Vagina (tissue), 2 donors: ENCODE measurements at regions of chr7 and their contacts with region 1.

Region 1: DNA sequence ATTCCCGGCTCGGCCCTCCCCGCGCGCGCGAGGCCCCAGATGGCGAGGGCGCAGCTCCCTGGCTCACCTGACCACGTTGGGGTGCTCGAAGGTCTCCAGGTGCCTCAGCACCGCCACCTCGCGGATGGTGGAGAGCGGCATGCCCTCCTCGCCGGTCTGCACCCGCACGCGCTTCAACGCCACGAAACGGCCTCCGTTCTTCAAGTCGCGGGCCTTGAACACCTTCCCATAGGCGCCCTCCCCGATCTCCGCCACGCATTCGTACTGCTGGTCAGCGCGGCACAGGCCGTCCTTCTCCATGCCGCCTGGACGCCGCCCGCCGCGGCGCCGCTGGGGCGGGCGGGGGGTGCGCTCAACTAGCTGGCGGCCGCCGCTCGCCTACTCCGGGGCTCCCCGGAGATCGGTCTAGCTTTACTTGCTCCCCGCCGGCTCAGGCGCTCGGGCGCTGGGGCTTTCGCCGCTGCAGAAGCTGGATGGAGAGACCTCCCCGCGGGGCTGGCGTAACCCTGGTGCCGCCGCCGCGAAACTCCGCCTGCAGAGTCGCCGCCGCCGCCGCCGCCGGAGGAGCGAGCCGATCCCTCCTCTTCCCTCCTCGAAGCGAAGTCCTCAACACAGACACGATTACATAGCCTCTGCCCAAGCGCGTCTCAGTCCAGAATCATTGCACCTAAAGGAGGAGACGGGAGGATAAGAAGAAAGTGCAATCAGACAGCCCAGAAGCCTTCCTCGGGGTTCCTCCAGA is 3.2 kb downstream of the CDK6 start:
- DNase-seq: no peak
- H3K4me3 ChIP-seq: peak overlapping the region; percentile 57 to 89
- H3K27ac ChIP-seq: peak overlapping the region; percentile 84
- H3K4me1 ChIP-seq: peaks cover 42% of the 10 kb centered on the region
- H3K27me3 ChIP-seq: no peaks in the 10 kb centered on the region
- CTCF ChIP-seq: peak; percentile 51 to 89 (median 76)
- POLR2A ChIP-seq: no peak

Region 2: GRCh38 chr7:92614660-92615174 is 218.5 kb before region 1 on chr7:
- intact Hi-C with region 1: loop called (anchors 5 kb)
- DNase-seq: no peak
- H3K4me3 ChIP-seq: no peak overlapping the region
- H3K27ac ChIP-seq: no peak overlapping the region
- H3K4me1 ChIP-seq: no peaks in the 10 kb centered on the region
- H3K27me3 ChIP-seq: no peaks in the 10 kb centered on the region
- CTCF ChIP-seq: no peak
- POLR2A ChIP-seq: no peak

Region 3: GRCh38 chr7:92717993-92718716 is 115.0 kb before region 1 on chr7:
- intact Hi-C with region 1: loop called (anchors 10 kb)
- DNase-seq: no peak
- H3K4me3 ChIP-seq: peak overlapping the region; percentile 51 to 55
- H3K27ac ChIP-seq: peak overlapping the region; percentile 87
- H3K4me1 ChIP-seq: peaks cover 8% of the 10 kb centered on the region
- H3K27me3 ChIP-seq: no peaks in the 10 kb centered on the region
- CTCF ChIP-seq: no peak
- POLR2A ChIP-seq: no peak